ENCODE measurements at regions of chr13 and their contacts with region 1.

Region 1: GRCh38 chr13:24727731-24728601 is 36.0 kb upstream of the RNF17 start:
- DNase-seq: peak; percentile 82
- ATAC-seq: peak; percentile 99
- H3K4me3 Mint-ChIP-seq: no peak overlapping the region
- H3K27ac Mint-ChIP-seq: no peak overlapping the region
- H3K4me1 Mint-ChIP-seq: no peaks in the 10 kb centered on the region
- H3K27me3 Mint-ChIP-seq: peaks cover 6% of the 10 kb centered on the region

Region 2: GRCh38 chr13:24348797-24349515 is 379.0 kb before region 1 on chr13:
- CTCF ChIA-PET with region 1: no interaction called
- POLR2A ChIA-PET with region 1: no interaction called
- intact Hi-C with region 1: no loop called
- DNase-seq: no peak
- ATAC-seq: no peak
- H3K4me3 Mint-ChIP-seq: no peak overlapping the region
- H3K27ac Mint-ChIP-seq: no peak overlapping the region
- H3K4me1 Mint-ChIP-seq: no peaks in the 10 kb centered on the region
- H3K27me3 Mint-ChIP-seq: no peaks in the 10 kb centered on the region

Region 3: GRCh38 chr13:24574847-24575246 is 153.1 kb before region 1 on chr13:
- CTCF ChIA-PET with region 1: interaction called, 10 read pairs
- POLR2A ChIA-PET with region 1: no interaction called
- intact Hi-C with region 1: loop called (anchors 1 to 5 kb)
- DNase-seq: no peak
- ATAC-seq: peak; percentile 80
- H3K4me3 Mint-ChIP-seq: no peak overlapping the region
- H3K27ac Mint-ChIP-seq: no peak overlapping the region
- H3K4me1 Mint-ChIP-seq: peaks cover 16% of the 10 kb centered on the region
- H3K27me3 Mint-ChIP-seq: peaks cover 5% of the 10 kb centered on the region

Region 4: DNA sequence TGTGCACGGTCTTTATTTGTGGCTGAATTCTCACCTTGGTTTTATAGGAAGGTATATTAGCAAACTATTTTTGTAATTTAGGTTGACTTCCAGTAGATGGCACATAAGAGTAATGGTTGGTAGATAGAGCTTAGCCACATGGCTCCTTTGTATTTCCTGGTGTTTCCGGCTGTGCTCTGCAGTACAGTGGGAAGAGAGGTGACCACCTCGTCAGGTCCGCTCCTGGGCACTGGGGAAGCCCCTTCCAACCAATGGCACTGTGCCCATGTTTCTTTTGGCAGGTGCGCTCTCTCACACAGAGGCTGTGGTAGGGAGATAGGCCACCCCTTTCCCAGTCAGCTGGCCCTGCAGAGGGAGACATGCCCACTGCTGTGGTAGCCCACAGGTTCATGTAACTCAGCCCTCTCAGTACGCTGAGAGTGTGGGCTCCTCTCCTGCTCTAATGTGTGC is 122.0 kb before region 1 on chr13:
- CTCF ChIA-PET with region 1: interaction called, 24 read pairs
- POLR2A ChIA-PET with region 1: no interaction called
- intact Hi-C with region 1: loop called (anchors 1 to 10 kb)
- DNase-seq: peak; percentile 26
- ATAC-seq: peak; percentile 90
- H3K4me3 Mint-ChIP-seq: no peak overlapping the region
- H3K27ac Mint-ChIP-seq: peak overlapping the region; percentile 65
- H3K4me1 Mint-ChIP-seq: peaks cover 32% of the 10 kb centered on the region
- H3K27me3 Mint-ChIP-seq: peaks cover 15% of the 10 kb centered on the region

Region 5: DNA sequence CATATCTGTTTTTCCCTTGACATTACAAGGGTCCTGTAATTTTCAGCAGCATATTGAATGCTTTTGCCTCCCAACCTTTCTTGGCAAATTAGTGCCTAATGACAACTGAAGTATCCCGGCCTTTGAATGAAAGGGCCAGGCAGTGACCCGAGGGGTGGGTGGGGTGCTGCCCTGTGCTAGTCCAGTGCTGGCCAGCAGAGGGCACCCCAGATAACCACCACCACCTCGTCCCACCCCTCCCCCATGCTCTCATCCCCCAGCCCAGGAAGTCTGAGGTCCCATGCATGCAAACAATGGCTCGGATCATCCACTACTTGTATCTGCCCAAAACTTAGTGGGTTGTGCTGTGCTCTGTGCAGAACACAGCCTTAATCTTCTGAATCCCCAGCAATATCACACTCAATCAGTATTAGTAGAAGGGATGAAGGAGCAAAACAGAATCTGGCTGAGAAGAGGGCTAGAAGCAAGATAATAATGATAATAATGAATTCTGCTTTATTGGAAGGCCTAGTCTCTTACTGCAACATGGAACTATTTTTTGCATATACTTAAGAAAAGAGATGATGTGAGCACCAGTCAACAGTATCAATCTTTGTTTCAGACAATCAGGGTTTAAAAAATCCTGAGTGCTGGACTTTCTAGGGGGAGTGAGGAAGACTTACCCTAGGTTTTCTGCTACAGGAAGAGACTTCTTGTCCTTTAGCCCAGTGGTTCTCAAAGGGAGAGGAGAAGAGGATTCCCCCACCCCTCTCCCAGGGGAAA is 43.9 kb before region 1 on chr13:
- CTCF ChIA-PET with region 1: interaction called, 9 read pairs
- POLR2A ChIA-PET with region 1: interaction called, 3 read pairs
- intact Hi-C with region 1: loop called (anchors 1 to 2 kb)
- DNase-seq: peak; percentile 83
- ATAC-seq: peak; percentile 76
- H3K4me3 Mint-ChIP-seq: no peak overlapping the region
- H3K27ac Mint-ChIP-seq: no peak overlapping the region
- H3K4me1 Mint-ChIP-seq: peaks cover 33% of the 10 kb centered on the region
- H3K27me3 Mint-ChIP-seq: peaks cover 46% of the 10 kb centered on the region

Region 6: GRCh38 chr13:24693862-24694471 is 34.0 kb before region 1 on chr13:
- CTCF ChIA-PET with region 1: interaction called, 39 read pairs
- POLR2A ChIA-PET with region 1: no interaction called
- intact Hi-C with region 1: loop called (anchors 1 kb)
- DNase-seq: peak; percentile 67
- ATAC-seq: peak; percentile 87
- H3K4me3 Mint-ChIP-seq: no peak overlapping the region
- H3K27ac Mint-ChIP-seq: no peak overlapping the region
- H3K4me1 Mint-ChIP-seq: peaks cover 7% of the 10 kb centered on the region
- H3K27me3 Mint-ChIP-seq: peaks cover 27% of the 10 kb centered on the region

Region 7: DNA sequence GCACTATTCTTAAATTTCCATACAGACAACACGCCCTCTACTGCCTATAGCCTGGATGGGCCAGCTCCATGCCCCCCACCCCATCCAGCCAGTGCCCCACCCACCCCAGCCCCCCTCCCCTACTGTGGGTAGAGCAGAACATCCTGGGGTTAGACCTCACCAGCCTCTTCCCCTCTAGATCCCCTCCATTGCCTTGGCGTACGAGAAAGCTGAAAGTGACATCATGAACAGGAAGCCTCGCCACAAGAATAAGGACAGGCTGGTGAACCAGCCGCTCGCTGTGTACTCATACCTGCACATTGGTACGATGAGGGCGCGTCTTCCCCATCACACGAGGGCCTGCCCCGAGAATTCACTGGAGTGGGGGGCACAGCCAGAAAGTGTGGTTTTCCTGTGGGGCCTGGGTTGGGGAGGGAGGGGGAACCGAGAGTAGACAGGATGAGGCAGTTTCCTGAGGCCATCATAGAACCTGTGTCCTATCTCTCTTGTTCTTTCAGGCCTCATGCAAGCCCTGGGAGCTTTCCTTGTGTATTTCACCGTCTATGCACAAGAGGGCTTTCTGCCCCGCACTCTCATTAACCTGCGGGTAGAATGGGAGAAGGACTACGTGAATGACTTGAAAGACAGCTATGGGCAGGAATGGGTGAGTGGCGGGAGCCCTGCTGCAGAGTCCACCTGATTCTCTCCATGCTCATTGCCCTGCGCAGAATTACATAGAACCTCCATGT is 18.6 kb before region 1 on chr13:
- CTCF ChIA-PET with region 1: interaction called, 13 read pairs
- POLR2A ChIA-PET with region 1: interaction called, 4 read pairs
- intact Hi-C with region 1: no loop called
- DNase-seq: peak; percentile 84
- ATAC-seq: peak; percentile 98
- H3K4me3 Mint-ChIP-seq: peak overlapping the region; percentile 10
- H3K27ac Mint-ChIP-seq: peak overlapping the region; percentile 75
- H3K4me1 Mint-ChIP-seq: peaks cover 25% of the 10 kb centered on the region
- H3K27me3 Mint-ChIP-seq: peaks cover 3% of the 10 kb centered on the region

Region 8: DNA sequence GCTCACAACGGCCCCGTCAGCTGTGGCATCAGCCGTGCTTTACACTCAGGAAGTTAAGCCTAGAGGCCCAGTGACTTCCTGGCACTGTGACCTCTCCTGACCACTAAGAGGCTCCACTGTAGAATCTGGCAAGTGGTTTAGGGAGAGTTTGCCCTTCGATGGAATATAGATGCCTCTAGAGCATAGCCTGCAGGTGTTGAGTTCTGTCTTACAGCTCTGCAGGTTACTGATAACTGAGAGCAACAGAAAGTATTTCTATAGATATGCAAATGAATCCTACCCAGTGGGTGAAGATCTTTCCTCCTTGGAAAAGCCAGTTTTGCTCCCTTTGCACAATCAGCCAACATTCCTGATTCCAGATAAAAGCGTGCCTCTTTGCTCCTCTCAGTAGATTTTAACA is 12.0 kb before region 1 on chr13:
- CTCF ChIA-PET with region 1: interaction called, 13 read pairs
- POLR2A ChIA-PET with region 1: interaction called, 4 read pairs
- intact Hi-C with region 1: no loop called
- DNase-seq: no peak
- ATAC-seq: peak; percentile 23
- H3K4me3 Mint-ChIP-seq: no peak overlapping the region
- H3K27ac Mint-ChIP-seq: no peak overlapping the region
- H3K4me1 Mint-ChIP-seq: no peaks in the 10 kb centered on the region
- H3K27me3 Mint-ChIP-seq: peaks cover 5% of the 10 kb centered on the region

Measured in activated CD4-positive, alpha-beta T cell treated with anti-CD3 and anti-CD28 coated beads for 36 hours (primary cell).